ENCODE measurements at regions of chr11 and their contacts with region 1.

Region 1: GRCh38 chr11:36273110-36273509 is 16.1 kb downstream of the COMMD9 start:
- DNase-seq: no peak
- H3K4me3 Mint-ChIP-seq: no peak overlapping the region
- H3K27ac Mint-ChIP-seq: no peak overlapping the region
- H3K4me1 Mint-ChIP-seq: peaks cover 11% of the 10 kb centered on the region
- H3K27me3 Mint-ChIP-seq: no peaks in the 10 kb centered on the region

Region 2: DNA sequence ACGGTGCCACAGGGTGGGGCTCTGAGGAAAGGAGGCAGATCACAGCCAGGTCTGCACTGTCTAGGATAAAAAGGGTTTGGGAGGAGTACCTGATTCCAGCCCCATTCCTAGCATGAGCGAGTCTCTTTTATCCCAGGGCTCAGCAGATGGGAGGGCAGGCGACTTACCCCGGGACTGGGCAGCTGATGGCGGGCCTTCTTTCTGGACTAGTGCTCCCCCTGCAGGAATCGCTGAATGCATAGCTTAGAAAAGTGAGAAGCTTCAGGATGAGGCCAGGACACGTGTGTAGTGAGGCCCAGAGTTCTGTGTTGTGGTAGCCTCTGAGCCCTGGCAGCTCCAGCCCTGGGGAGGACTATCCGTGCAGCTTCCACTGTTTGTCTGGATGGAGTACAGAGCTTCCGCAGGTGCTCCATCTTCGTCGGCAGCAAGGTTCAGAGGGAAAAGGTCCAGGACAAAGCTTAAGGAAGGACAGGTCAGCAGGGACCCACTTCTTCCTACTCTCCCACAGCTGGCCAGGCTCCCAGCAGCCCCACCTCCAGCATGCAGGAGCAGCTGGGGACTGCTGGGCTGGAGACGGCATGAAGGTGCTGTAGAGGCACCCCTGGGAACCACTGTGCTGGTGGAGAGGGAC is 14.3 kb before region 1 on chr11:
- CTCF ChIA-PET with region 1: interaction called, 10 read pairs
- POLR2A ChIA-PET with region 1: no interaction called
- DNase-seq: peak; percentile 21
- H3K4me3 Mint-ChIP-seq: no peak overlapping the region
- H3K27ac Mint-ChIP-seq: no peak overlapping the region
- H3K4me1 Mint-ChIP-seq: no peaks in the 10 kb centered on the region
- H3K27me3 Mint-ChIP-seq: peaks cover 17% of the 10 kb centered on the region

Measured in activated CD4-positive, alpha-beta memory T cell treated with anti-CD3 and anti-CD28 coated beads, Interleukin-2, amount 10 ng/mL, durations not matched to agents 7 days and 5 days (primary cell).